Activated T-helper 2 cell treated with anti-CD3 and anti-CD28 coated beads, Interferon-gamma antibody, Interleukin-2, Interleukin-4, amounts not matched to agents 10 μg/mL and 5 μg/mL and 100 μg/mL, durations not matched to agents 14 hours and 24 hours and 36 hours (primary cell): ENCODE measurements at regions of chr21 and their contacts with region 1.

Region 1: DNA sequence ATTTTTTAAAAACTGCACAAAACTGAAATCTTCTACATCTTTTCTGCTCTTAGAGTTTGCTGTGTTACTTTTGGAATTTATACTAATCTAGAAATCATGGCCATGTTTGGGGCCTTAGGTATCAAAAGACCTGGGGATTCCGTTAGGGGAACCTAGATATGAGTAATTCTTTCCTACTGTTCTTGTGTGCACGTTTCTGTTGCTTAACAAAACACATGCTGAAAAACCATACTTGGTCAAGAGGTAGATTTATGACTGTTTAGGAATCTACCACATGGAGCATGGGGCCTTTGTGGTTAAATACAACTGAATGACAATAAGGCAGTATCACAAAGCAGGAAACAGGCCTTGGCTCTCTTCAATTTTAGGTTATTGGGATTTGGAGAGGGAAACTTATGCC is 291.9 kb upstream of the USP25 start:
- DNase-seq: no peak
- H3K4me3 Mint-ChIP-seq: no peak overlapping the region
- H3K27ac Mint-ChIP-seq: no peak overlapping the region
- H3K4me1 Mint-ChIP-seq: peaks cover 28% of the 10 kb centered on the region
- H3K27me3 Mint-ChIP-seq: no peaks in the 10 kb centered on the region

Region 2: DNA sequence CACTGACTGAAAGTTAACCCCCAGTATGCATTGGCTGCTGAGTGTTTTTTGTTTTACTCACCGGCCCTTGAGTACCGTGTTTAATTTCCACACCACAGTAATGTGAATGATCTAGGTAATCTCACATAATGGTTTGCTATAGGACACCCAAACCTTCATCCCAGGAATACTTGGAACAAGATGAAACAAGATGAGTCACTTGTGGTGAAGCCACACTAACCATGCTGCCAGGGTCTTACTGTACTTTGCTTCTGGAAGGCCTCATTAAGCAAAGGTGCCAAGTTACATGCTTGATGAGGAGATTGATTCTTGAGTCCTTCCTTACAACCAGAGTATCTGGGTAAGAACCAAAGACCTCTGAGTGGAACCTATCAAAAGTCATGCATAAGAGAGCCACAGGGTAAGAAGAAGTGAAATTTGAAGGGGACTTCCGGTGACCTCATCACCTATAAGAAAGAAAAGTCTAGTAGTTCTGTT is 536.4 kb before region 1 on chr21:
- intact Hi-C with region 1: loop called (anchors 2 kb)
- DNase-seq: no peak
- H3K4me3 Mint-ChIP-seq: no peak overlapping the region
- H3K27ac Mint-ChIP-seq: peak overlapping the region; percentile 52
- H3K4me1 Mint-ChIP-seq: peaks cover 12% of the 10 kb centered on the region
- H3K27me3 Mint-ChIP-seq: no peaks in the 10 kb centered on the region

Region 3: DNA sequence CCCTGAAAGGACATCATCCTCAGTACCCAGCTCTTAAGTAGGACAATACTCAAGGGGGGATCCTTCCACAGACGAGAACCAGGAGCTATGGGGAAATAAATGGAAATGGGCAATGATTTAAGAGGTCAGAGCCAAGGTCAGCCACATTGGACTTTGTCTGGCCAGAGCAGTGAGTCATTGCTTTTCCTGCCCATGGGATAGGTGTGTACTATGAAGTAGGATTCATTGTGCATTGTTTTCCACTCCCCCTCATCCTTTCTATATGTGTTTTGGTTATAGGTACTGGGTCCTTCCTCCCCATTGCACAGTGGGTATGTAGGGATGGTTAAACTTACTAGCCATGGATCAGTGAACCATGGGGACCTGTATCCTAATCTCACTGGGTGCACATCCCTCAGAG is 37.0 kb before region 1 on chr21:
- intact Hi-C with region 1: no loop called
- DNase-seq: no peak
- H3K4me3 Mint-ChIP-seq: no peak overlapping the region
- H3K27ac Mint-ChIP-seq: no peak overlapping the region
- H3K4me1 Mint-ChIP-seq: no peaks in the 10 kb centered on the region
- H3K27me3 Mint-ChIP-seq: peaks cover 1% of the 10 kb centered on the region

Region 4: DNA sequence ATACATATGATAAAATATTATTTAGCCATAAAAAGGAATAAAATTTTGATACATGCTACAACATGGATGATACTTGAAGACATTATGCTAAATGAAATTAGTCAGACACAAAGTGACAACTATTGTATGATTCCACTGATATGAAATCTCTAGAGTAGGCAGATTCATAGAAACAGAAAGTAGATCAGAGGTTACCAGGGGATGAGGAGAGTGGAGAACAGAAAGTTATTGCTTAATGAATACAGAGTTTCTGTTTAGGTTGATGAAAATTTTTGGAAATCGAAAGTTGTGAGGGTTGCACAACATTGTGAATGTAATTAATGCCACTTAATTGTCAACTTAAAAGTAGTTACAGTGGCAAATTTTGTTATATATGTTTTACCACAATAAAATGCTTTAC is 23.8 kb before region 1 on chr21:
- intact Hi-C with region 1: loop called (anchors 2 kb)
- DNase-seq: no peak
- H3K4me3 Mint-ChIP-seq: no peak overlapping the region
- H3K27ac Mint-ChIP-seq: no peak overlapping the region
- H3K4me1 Mint-ChIP-seq: peaks cover 4% of the 10 kb centered on the region
- H3K27me3 Mint-ChIP-seq: peaks cover 6% of the 10 kb centered on the region

Region 5: GRCh38 chr21:15514073-15514946 is 76.4 kb after region 1 on chr21:
- intact Hi-C with region 1: loop called (anchors 2 kb)
- DNase-seq: peak; percentile 62
- H3K4me3 Mint-ChIP-seq: peak overlapping the region; percentile 15
- H3K27ac Mint-ChIP-seq: peak overlapping the region; percentile 46
- H3K4me1 Mint-ChIP-seq: peaks cover 17% of the 10 kb centered on the region
- H3K27me3 Mint-ChIP-seq: no peaks in the 10 kb centered on the region

Region 6: DNA sequence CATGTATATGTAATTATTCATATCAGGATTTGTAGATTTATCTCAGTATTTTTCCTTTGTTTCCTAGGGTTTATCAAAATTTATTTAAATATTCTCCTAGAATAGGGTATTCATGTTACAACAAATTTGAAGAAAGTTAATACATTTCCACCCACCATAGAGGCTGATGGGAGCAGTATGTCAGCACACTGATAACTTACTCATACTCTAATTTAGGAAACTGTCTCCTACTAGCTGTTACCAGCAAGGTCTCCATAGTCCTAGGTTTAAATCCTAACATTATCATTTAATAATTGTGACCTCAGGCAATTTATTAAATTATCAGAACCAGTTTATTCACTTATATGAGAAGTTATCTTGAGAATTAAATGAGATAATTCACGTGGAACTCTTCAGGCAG is 418.9 kb after region 1 on chr21:
- intact Hi-C with region 1: no loop called
- DNase-seq: no peak
- H3K4me3 Mint-ChIP-seq: no peak overlapping the region
- H3K27ac Mint-ChIP-seq: no peak overlapping the region
- H3K4me1 Mint-ChIP-seq: peaks cover 5% of the 10 kb centered on the region
- H3K27me3 Mint-ChIP-seq: no peaks in the 10 kb centered on the region